Mammary epithelial cell (primary cell): ENCODE measurements at regions of chr17 and their contacts with region 1.

Region 1: GRCh38 chr17:7703584-7704479 is 1.2 kb upstream of the EFNB3 start:
- DNase-seq: peak; percentile 32
- H3K4me3 ChIP-seq: no peak overlapping the region
- H3K27ac ChIP-seq: no peak overlapping the region
- H3K4me1 ChIP-seq: peaks cover 12% of the 10 kb centered on the region
- H3K27me3 ChIP-seq: no peaks in the 10 kb centered on the region
- CTCF ChIP-seq: no peak

Region 2: GRCh38 chr17:7644775-7645174 is 59.1 kb before region 1 on chr17:
- CTCF ChIA-PET with region 1: interaction called, 8 read pairs
- dilution Hi-C with region 1: loop called (anchors 5 kb)
- in situ Hi-C with region 1: no loop called
- intact Hi-C with region 1: no loop called
- DNase-seq: no peak
- H3K4me3 ChIP-seq: no peak overlapping the region
- H3K27ac ChIP-seq: no peak overlapping the region
- H3K4me1 ChIP-seq: no peaks in the 10 kb centered on the region
- H3K27me3 ChIP-seq: no peaks in the 10 kb centered on the region
- CTCF ChIP-seq: no peak

Region 3: GRCh38 chr17:7782237-7782636 is 78.4 kb after region 1 on chr17:
- CTCF ChIA-PET with region 1: no interaction called
- dilution Hi-C with region 1: loop called (anchors 5 kb)
- in situ Hi-C with region 1: no loop called
- intact Hi-C with region 1: no loop called
- DNase-seq: peak; percentile 32
- H3K4me3 ChIP-seq: no peak overlapping the region
- H3K27ac ChIP-seq: no peak overlapping the region
- H3K4me1 ChIP-seq: peaks cover 3% of the 10 kb centered on the region
- H3K27me3 ChIP-seq: no peaks in the 10 kb centered on the region
- CTCF ChIP-seq: peak; percentile 13 to 35